Activated CD4-positive, alpha-beta memory T cell treated with anti-CD3 and anti-CD28 coated beads for 36 hours (primary cell): ENCODE measurements at regions of chr20 and their contacts with region 1.

Region 1: GRCh38 chr20:5529331-5530148 is 212.8 kb upstream of the PROKR2 start:
- DNase-seq: peak; percentile 95
- H3K4me3 Mint-ChIP-seq: peak overlapping the region; percentile 21
- H3K27ac Mint-ChIP-seq: peak overlapping the region; percentile 61
- H3K4me1 Mint-ChIP-seq: peaks cover 26% of the 10 kb centered on the region
- H3K27me3 Mint-ChIP-seq: no peaks in the 10 kb centered on the region

Region 2: GRCh38 chr20:5328268-5328667 is 201.3 kb before region 1 on chr20:
- CTCF ChIA-PET with region 1: no interaction called
- POLR2A ChIA-PET with region 1: no interaction called
- intact Hi-C with region 1: no loop called
- DNase-seq: no peak
- H3K4me3 Mint-ChIP-seq: no peak overlapping the region
- H3K27ac Mint-ChIP-seq: no peak overlapping the region
- H3K4me1 Mint-ChIP-seq: no peaks in the 10 kb centered on the region
- H3K27me3 Mint-ChIP-seq: peaks cover 10% of the 10 kb centered on the region

Region 3: GRCh38 chr20:5550733-5551529 is 21.4 kb after region 1 on chr20:
- CTCF ChIA-PET with region 1: interaction called, 35 read pairs
- POLR2A ChIA-PET with region 1: no interaction called
- intact Hi-C with region 1: loop called (anchors 2 kb)
- DNase-seq: no peak
- H3K4me3 Mint-ChIP-seq: no peak overlapping the region
- H3K27ac Mint-ChIP-seq: no peak overlapping the region
- H3K4me1 Mint-ChIP-seq: peaks cover 23% of the 10 kb centered on the region
- H3K27me3 Mint-ChIP-seq: no peaks in the 10 kb centered on the region

Region 4: GRCh38 chr20:5569021-5569420 is 39.5 kb after region 1 on chr20:
- CTCF ChIA-PET with region 1: interaction called, 38 read pairs
- POLR2A ChIA-PET with region 1: no interaction called
- intact Hi-C with region 1: loop called (anchors 1 kb)
- DNase-seq: peak; percentile 58
- H3K4me3 Mint-ChIP-seq: no peak overlapping the region
- H3K27ac Mint-ChIP-seq: peak overlapping the region; percentile 30
- H3K4me1 Mint-ChIP-seq: peaks cover 30% of the 10 kb centered on the region
- H3K27me3 Mint-ChIP-seq: no peaks in the 10 kb centered on the region

Region 5: GRCh38 chr20:5822569-5822968 is 293.0 kb after region 1 on chr20:
- CTCF ChIA-PET with region 1: interaction called, 9 read pairs
- POLR2A ChIA-PET with region 1: interaction called, 3 read pairs
- intact Hi-C with region 1: loop called (anchors 1 kb)
- DNase-seq: no peak
- H3K4me3 Mint-ChIP-seq: no peak overlapping the region
- H3K27ac Mint-ChIP-seq: no peak overlapping the region
- H3K4me1 Mint-ChIP-seq: peaks cover 21% of the 10 kb centered on the region
- H3K27me3 Mint-ChIP-seq: no peaks in the 10 kb centered on the region

Region 6: DNA sequence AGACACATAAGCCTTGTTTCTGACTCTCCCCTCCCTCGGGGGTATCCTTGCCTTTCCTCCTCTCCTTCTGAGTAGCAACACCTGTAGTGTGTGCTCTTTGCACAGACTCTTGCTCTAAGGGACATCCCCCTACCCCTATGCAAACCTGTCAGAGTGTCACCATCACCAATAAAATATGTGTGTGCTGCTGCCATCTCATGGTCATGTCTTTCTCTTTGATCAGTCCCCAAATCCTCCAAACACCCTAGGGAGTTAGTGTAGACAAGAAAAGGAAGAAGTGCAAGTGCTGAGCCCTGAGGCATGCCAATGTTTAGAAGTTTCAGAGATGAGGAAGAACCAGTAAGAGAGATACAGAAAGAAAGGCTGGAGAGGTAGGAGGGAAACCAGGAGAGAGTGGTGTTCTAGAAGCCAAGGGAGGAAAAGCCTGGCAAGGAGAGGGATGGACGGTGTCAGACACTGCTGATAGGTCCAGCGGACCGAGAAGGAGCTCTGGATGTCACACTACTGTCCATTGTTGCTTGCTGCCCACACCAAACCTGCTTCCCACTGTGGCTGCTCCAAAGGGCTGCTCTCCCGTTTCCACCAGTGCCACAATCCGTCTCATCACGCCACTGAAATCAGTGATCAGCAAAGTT is 404.4 kb after region 1 on chr20:
- CTCF ChIA-PET with region 1: interaction called, 21 read pairs
- POLR2A ChIA-PET with region 1: no interaction called
- intact Hi-C with region 1: loop called (anchors 1 kb)
- DNase-seq: peak; percentile 26
- H3K4me3 Mint-ChIP-seq: no peak overlapping the region
- H3K27ac Mint-ChIP-seq: no peak overlapping the region
- H3K4me1 Mint-ChIP-seq: no peaks in the 10 kb centered on the region
- H3K27me3 Mint-ChIP-seq: no peaks in the 10 kb centered on the region

Region 7: GRCh38 chr20:6008254-6008653 is 478.7 kb after region 1 on chr20:
- CTCF ChIA-PET with region 1: interaction called, 12 read pairs
- POLR2A ChIA-PET with region 1: no interaction called
- intact Hi-C with region 1: loop called (anchors 1 kb)
- DNase-seq: peak; percentile 13
- H3K4me3 Mint-ChIP-seq: peak overlapping the region; percentile 16
- H3K27ac Mint-ChIP-seq: no peak overlapping the region
- H3K4me1 Mint-ChIP-seq: peaks cover 40% of the 10 kb centered on the region
- H3K27me3 Mint-ChIP-seq: no peaks in the 10 kb centered on the region